Activated CD4-positive, alpha-beta memory T cell treated with anti-CD3 and anti-CD28 coated beads for 36 hours (primary cell): ENCODE measurements at regions of chr7 and their contacts with region 1.

Region 1: GRCh38 chr7:105759670-105760550 is 116.5 kb downstream of the ATXN7L1 start:
- DNase-seq: no peak
- H3K4me3 Mint-ChIP-seq: no peak overlapping the region
- H3K27ac Mint-ChIP-seq: no peak overlapping the region
- H3K4me1 Mint-ChIP-seq: peaks cover 27% of the 10 kb centered on the region
- H3K27me3 Mint-ChIP-seq: no peaks in the 10 kb centered on the region

Region 2: DNA sequence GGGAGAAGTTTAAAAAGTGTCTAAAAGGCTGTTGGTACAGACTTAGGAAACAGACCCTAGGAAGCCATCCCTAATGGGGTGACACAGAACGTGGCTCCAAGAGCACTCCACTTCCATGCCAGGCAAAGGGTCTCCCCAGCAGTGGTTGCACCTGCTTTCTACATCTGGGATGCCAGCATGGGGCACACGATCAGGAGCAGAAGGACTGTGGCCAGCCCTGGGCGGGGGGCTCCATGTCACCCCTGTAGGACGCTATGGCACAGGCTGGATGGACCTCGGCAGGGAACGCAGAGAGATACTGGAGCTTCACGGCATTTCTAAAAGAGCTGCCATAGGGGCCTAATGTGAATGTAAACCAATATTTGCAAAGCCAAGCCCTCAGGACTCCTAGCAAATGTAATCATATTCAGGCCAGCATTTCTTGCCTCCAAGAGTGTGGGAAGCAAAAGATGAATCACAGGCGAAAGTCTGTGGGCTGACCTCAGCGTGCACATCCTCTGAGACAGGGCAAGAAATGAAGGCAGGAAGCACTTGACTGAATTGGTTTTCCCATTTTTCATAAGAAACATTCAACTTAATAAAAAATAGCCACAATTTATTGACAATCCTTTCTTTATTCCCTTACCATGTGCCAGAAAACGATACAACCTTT is 22.6 kb after region 1 on chr7:
- CTCF ChIA-PET with region 1: interaction called, 12 read pairs
- POLR2A ChIA-PET with region 1: no interaction called
- intact Hi-C with region 1: no loop called
- DNase-seq: peak; percentile 80
- H3K4me3 Mint-ChIP-seq: no peak overlapping the region
- H3K27ac Mint-ChIP-seq: no peak overlapping the region
- H3K4me1 Mint-ChIP-seq: peaks cover 14% of the 10 kb centered on the region
- H3K27me3 Mint-ChIP-seq: no peaks in the 10 kb centered on the region

Region 3: GRCh38 chr7:105849122-105849855 is 89.4 kb after region 1 on chr7:
- CTCF ChIA-PET with region 1: interaction called, 13 read pairs
- POLR2A ChIA-PET with region 1: no interaction called
- intact Hi-C with region 1: no loop called
- DNase-seq: peak; percentile 87
- H3K4me3 Mint-ChIP-seq: peak overlapping the region; percentile 11
- H3K27ac Mint-ChIP-seq: peak overlapping the region; percentile 68
- H3K4me1 Mint-ChIP-seq: peaks cover 46% of the 10 kb centered on the region
- H3K27me3 Mint-ChIP-seq: no peaks in the 10 kb centered on the region

Region 4: DNA sequence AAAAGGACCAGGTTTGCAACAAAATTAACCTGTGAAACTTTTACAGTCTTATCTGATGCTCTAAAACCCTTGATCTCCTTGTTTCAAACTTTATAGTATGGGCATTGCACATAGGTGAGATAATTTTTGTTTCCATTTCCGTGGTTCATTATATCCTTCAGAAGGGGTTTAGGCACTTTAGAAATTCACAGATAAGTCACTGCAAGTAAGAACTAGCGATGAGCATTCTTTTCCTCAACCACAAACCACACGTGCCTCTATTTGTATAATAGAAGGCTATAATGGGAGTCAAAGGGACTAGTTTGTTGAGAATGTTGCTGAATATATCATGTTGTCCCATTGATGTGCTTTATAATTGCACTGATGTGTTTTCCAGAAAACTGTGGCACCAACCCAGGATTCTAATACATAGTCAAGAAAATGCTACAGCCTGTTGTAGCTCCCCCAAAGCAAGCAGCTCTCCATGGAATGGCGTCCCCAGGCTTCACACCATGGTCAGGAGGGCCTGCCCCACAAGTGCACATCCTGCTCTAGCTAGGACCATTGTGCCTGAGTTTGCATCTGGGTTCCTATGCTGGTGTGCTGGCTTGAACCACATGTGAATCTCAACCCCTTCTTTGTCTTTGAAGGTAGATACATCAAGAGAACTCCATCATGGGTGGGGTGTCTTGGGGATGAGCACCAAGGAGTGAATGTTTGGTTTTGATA is 130.5 kb after region 1 on chr7:
- CTCF ChIA-PET with region 1: interaction called, 11 read pairs
- POLR2A ChIA-PET with region 1: no interaction called
- intact Hi-C with region 1: no loop called
- DNase-seq: peak; percentile 29
- H3K4me3 Mint-ChIP-seq: no peak overlapping the region
- H3K27ac Mint-ChIP-seq: no peak overlapping the region
- H3K4me1 Mint-ChIP-seq: peaks cover 12% of the 10 kb centered on the region
- H3K27me3 Mint-ChIP-seq: no peaks in the 10 kb centered on the region

Region 5: GRCh38 chr7:106009403-106010226 is 249.7 kb after region 1 on chr7:
- CTCF ChIA-PET with region 1: interaction called, 58 read pairs
- POLR2A ChIA-PET with region 1: no interaction called
- intact Hi-C with region 1: loop called (anchors 1 kb)
- DNase-seq: peak; percentile 91
- H3K4me3 Mint-ChIP-seq: no peak overlapping the region
- H3K27ac Mint-ChIP-seq: no peak overlapping the region
- H3K4me1 Mint-ChIP-seq: peaks cover 24% of the 10 kb centered on the region
- H3K27me3 Mint-ChIP-seq: peaks cover 2% of the 10 kb centered on the region

Region 6: GRCh38 chr7:106050011-106050745 is 290.3 kb after region 1 on chr7:
- CTCF ChIA-PET with region 1: interaction called, 149 read pairs
- POLR2A ChIA-PET with region 1: no interaction called
- intact Hi-C with region 1: no loop called
- DNase-seq: no peak
- H3K4me3 Mint-ChIP-seq: no peak overlapping the region
- H3K27ac Mint-ChIP-seq: no peak overlapping the region
- H3K4me1 Mint-ChIP-seq: no peaks in the 10 kb centered on the region
- H3K27me3 Mint-ChIP-seq: no peaks in the 10 kb centered on the region

Region 7: DNA sequence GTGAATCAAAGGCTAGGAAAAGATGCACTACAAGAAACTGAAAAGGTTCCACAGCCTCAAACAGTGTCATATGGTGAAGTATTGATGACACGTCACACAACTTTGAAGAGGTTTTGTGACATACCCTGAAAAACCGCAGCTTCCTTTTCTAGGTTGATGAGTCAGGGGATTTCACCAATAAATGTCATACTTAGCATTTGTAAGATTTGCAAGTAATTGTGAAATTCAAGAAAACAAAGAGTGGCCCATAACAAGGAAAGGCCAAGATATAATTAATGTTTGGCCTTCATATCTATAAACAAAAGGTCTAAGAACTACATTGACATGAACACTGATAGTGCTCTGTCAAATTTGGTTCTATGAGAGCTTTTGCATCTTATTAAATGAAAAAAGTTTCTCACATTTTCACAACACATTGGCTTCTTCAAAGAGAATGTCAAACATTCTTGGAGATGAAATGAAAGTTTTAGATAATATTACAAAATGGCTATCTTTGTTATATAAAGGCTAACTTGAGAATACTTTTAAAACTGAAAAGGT is 586.8 kb after region 1 on chr7:
- CTCF ChIA-PET with region 1: no interaction called
- POLR2A ChIA-PET with region 1: no interaction called
- intact Hi-C with region 1: no loop called
- DNase-seq: peak; percentile 61
- H3K4me3 Mint-ChIP-seq: peak overlapping the region; percentile 59
- H3K27ac Mint-ChIP-seq: peak overlapping the region; percentile 99
- H3K4me1 Mint-ChIP-seq: peaks cover 60% of the 10 kb centered on the region
- H3K27me3 Mint-ChIP-seq: peaks cover 4% of the 10 kb centered on the region